Mammary epithelial cell (primary cell): ENCODE measurements at regions of chr3 and their contacts with region 1.

Region 1: DNA sequence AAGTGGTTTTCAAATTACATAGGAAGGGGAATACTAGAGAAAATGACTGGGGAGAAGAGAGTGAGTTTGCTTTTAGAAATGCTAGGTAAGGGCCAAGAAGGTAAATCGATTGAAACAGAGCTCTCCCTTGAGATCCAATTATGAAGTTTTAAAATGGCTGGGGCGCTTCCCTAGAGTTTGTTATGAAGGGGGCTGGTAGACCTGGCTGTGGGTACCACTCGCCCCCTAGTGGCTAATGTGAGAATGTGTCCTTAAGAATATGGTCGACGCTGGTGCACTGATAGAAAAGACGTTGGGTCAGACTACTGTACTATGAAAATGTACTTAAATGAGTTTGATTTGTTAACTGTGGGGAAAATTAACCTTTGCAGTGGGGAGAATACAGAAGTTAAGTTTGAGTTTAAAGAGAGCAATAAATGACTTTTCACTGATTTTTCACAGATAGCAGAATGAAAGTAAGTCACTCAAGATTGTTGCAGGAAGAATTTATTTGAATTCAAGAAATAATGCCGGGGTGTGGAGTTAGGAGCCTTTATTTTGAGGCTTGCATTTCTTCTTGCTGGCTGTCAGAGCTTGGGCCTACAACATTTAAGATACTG is 9.2 kb downstream of the TMPRSS7 start:
- DNase-seq: peak; percentile 58
- H3K4me3 ChIP-seq: no peak overlapping the region
- H3K27ac ChIP-seq: peak overlapping the region; percentile 17
- H3K4me1 ChIP-seq: no peaks in the 10 kb centered on the region
- H3K27me3 ChIP-seq: no peaks in the 10 kb centered on the region
- CTCF ChIP-seq: peak; percentile 85

Region 2: DNA sequence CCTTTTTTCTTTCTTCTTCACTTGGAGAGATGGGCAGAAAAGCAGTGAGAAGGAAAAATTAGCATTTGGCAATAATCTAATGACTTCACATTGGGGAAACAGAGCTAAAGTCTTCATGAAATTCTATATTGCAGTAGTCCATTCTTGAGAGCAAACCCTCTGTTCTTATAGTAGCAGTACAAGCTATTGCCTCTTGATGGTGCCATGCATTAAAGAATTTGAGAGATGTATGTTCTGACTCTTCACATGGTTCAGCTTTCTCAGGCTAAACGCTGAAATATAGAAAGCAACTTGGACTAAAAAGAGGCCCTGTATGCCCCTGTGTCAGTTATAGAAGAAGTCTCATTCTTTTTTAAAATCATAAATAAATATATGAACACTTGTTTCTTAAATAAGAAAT is 148.6 kb before region 1 on chr3:
- CTCF ChIA-PET with region 1: no interaction called
- dilution Hi-C with region 1: no loop called
- in situ Hi-C with region 1: no loop called
- intact Hi-C with region 1: loop called (anchors 1 kb)
- DNase-seq: no peak
- H3K4me3 ChIP-seq: no peak overlapping the region
- H3K27ac ChIP-seq: no peak overlapping the region
- H3K4me1 ChIP-seq: no peaks in the 10 kb centered on the region
- H3K27me3 ChIP-seq: no peaks in the 10 kb centered on the region
- CTCF ChIP-seq: peak; percentile 28 to 48

Region 3: DNA sequence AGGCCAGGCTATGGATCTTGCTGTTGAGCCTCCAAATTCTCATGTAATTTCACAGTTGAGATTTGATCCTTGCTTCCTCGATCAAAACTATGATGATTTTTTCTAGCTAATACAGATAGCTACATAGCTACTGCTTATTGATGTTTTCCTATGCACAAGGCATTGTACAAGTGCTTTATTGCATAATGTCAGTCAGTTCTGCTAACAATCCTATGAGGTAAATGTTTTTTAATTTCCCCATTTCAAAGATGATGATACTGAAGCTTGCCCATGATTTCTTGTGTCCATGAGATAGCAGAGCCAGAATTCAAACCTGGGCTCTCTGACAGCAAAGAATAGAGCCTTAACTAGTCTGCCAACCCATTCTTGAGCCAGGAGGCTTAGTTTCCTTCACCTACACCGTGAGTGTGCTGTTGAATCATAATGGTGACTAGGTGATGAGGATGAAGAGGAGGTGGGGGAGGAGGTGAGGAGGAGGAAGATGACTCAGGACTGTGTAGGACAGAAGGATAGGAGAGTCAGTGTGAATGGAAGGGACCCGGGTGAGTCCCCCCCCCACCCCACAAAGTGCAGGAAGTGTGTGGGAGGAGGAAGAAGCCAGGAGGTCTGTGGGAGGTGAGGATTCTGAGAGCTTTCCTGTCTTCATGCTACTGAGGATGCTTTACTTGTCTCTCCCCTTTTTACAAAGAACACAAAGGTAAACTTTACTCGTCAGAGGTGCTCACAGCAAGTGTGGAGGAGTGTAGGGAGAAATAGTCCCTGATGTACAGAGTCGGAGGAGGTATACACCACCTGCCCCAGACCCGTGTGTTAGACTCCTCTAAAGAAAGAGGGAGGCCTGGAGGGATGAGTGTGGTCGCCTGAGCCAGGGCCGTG is 41.4 kb before region 1 on chr3:
- CTCF ChIA-PET with region 1: interaction called, 5 read pairs
- dilution Hi-C with region 1: no loop called
- in situ Hi-C with region 1: no loop called
- intact Hi-C with region 1: loop called (anchors 5 kb)
- DNase-seq: peak; percentile 90
- H3K4me3 ChIP-seq: no peak overlapping the region
- H3K27ac ChIP-seq: peak overlapping the region; percentile 29
- H3K4me1 ChIP-seq: peaks cover 64% of the 10 kb centered on the region
- H3K27me3 ChIP-seq: no peaks in the 10 kb centered on the region
- CTCF ChIP-seq: no peak

Region 4: DNA sequence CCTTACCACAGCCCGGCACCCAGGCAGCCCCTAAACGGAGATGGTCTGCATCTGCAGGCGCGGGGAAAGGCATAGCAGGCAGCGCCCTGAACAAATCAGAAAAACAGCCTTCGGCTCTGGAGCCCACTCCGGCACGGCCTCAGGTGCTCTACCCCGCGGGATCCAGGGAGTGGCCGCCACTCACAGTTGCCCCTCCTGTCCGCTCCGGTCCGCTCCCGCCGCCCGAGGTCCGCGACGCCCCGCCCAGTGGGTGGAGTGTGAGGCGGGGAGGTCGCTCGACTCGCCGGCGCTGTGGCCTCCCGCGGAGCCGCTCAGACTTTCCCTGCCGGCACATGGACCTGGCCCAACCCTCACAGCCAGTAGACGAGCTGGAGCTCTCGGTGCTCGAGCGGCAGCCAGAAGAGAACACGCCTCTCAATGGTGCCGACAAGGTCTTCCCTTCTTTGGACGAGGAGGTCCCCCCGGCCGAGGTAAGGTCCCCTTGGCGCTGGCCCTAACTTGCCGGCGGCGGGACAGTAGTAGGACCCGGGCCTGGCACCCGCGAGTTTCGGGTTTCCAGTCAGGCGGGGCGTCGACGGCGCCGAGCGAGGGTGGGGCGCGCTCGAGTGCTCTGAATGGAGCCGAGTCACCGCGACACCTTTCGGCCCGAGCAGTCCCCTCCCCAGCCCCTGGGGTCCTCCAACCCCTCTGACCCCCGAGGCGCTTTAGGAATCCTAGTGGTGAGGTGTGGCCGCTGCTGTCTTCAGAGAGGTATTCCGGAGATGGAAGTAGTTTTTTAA is 42.6 kb after region 1 on chr3 and contains the start of gene C3orf52:
- CTCF ChIA-PET with region 1: no interaction called
- dilution Hi-C with region 1: no loop called
- in situ Hi-C with region 1: no loop called
- intact Hi-C with region 1: loop called (anchors 2 kb)
- DNase-seq: peak; percentile 91
- H3K4me3 ChIP-seq: peak within 1 kb of the TSS; percentile 72 to 89 (median 84)
- H3K27ac ChIP-seq: peak within 1 kb of the TSS; percentile 96
- H3K4me1 ChIP-seq: peaks cover 19% of the 10 kb centered on the region
- H3K27me3 ChIP-seq: no peaks in the 10 kb centered on the region
- CTCF ChIP-seq: peak in 1 of 2 donors; percentile 18
- total RNA-seq, gene C3orf52: 15.4 to 16.8 TPM